ENCODE measurements at regions of chr6 and their contacts with region 1.

Region 1: GRCh38 chr6:154814063-154814462 is 80.8 kb downstream of the SCAF8 start:
- DNase-seq: no peak
- H3K4me3 ChIP-seq: no peak overlapping the region
- H3K27ac ChIP-seq: no peak overlapping the region
- H3K4me1 ChIP-seq: no peaks in the 10 kb centered on the region
- H3K27me3 ChIP-seq: no peaks in the 10 kb centered on the region
- CTCF ChIP-seq: no peak
- POLR2A ChIP-seq: no peak

Region 2: DNA sequence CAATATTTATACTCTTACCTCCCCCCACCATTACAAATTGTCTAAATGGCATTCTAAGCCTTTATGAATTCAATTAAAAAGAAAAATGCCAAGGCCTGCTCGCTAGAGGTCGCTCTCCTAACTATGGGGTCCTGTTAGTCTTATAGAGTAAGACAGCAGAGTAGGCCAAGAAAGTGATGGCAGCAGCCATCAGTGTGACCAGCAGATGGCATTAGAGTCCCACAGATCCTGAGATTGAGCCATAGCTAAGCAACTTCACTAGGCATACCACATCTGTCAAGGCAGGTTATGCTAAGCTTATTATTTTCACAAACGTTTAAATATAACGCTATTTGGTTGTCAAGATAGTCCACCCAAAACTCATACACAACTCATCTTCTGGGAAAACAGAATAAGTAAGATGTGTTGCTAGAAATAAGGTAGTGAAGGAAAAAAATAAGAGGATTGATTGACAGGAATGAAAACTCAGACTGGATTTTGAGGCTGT is 138.4 kb before region 1 on chr6:
- intact Hi-C with region 1: loop called (anchors 10 kb)
- DNase-seq: peak; percentile 88 to 90
- H3K4me3 ChIP-seq: no peak overlapping the region
- H3K27ac ChIP-seq: no peak overlapping the region
- H3K4me1 ChIP-seq: no peaks in the 10 kb centered on the region
- H3K27me3 ChIP-seq: no peaks in the 10 kb centered on the region
- CTCF ChIP-seq: peak; percentile 97 to 99 (median 98)
- POLR2A ChIP-seq: no peak

Region 3: DNA sequence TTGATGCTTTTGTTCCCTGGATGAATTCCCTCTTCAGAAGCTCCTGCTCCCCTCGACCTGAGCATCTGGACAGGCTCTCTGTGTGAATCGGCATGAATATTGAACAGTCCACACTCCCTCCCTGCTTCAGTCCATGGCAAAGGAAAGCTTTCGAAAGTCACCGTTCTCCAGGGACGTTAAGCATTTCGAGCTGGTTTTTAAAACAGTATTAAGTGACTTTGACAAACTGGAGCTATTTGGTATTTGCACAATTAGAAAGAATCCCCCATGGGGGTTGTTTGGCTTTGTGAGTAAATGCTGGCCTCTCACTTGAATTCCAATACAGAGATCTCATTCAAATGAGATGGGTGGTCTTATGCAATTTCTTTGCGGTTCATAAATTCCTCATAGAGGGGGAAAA is 95.8 kb after region 1 on chr6:
- intact Hi-C with region 1: no loop called
- DNase-seq: no peak
- H3K4me3 ChIP-seq: no peak overlapping the region
- H3K27ac ChIP-seq: no peak overlapping the region
- H3K4me1 ChIP-seq: no peaks in the 10 kb centered on the region
- H3K27me3 ChIP-seq: no peaks in the 10 kb centered on the region
- CTCF ChIP-seq: no peak
- POLR2A ChIP-seq: no peak